ENCODE measurements at regions of chr7 and their contacts with region 1.

Region 1: DNA sequence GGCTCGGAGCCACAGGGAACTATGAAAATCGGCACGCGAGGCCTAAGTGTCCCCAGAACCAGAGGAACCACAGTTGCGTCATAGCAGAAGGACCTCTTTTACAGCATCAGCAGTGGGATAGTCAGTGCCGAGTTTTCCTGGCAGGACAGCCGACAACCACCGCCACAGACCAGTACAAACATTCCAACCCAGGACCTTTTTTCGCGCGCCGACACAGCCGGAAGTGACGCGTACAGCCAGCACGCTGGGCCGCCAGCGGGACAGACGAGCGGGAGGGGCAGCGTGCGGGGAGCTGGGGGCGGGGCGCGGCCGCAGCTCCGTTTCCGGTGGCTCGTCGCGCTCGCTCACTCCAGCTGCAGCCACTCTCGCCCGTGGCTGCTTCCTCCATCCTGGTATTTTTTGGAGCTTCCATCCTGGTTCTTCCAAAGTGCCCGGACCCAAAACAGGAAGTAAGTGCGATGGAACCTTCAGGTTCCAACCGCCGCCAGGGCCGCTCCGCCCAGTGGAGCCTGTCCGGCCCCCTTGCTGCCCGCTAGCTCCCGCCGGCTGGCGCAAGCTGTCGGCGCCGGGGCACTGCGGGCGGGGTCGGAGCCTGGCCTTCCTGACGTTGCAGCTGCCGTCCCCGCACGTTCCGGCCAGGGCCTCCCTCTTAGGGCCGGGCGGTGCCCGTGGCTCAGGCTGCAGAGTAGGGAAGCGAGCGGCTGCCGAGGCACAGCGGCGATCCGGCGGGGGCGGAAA is at the start of gene DMTF1:
- DNase-seq: peak; percentile 81 to 95
- ATAC-seq: peak; percentile 92 to 95
- H3K4me3 ChIP-seq: peak within 1 kb of the TSS; percentile 61
- H3K27ac ChIP-seq: peak within 1 kb of the TSS; percentile 90 to 99
- H3K4me1 ChIP-seq: peaks cover 36% of the 10 kb centered on the region
- CTCF ChIP-seq: no peak
- EP300 ChIP-seq: no peak
- POLR2A ChIP-seq: peak; percentile 76
- RAD21 ChIP-seq: no peak
- polyA plus RNA-seq, gene DMTF1: 110 and 124 TPM in 2 replicates

Region 2: DNA sequence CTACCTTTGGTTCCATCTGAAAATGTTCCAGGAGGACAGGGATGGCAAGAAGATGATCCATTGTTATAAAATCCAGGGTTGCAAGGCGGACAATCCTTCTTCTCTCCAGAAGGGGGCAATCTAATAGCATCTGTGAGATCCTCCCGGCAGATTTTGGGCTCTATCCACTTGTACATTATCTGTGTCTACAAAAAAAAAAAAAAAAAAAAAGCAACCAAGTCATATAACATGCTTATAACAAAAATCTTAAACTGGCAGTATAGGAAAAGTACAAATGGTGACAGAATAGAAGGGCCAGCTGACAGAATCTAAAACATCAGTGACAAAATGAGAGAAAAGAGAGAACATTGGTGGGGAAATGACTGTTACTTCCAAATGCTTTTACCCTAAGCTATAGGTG is 225.5 kb before region 1 on chr7:
- CTCF ChIA-PET with region 1: interaction called, 12 read pairs
- POLR2A ChIA-PET with region 1: no interaction called
- DNase-seq: peak; percentile 14 to 49
- ATAC-seq: peak; percentile 47 to 76; a peak in 3 of 6 replicates
- H3K4me3 ChIP-seq: no peak overlapping the region
- H3K27ac ChIP-seq: no peak overlapping the region
- H3K4me1 ChIP-seq: no peaks in the 10 kb centered on the region
- CTCF ChIP-seq: peak; percentile 57
- EP300 ChIP-seq: no peak
- POLR2A ChIP-seq: no peak
- RAD21 ChIP-seq: peak; percentile 41 to 57

Region 3: DNA sequence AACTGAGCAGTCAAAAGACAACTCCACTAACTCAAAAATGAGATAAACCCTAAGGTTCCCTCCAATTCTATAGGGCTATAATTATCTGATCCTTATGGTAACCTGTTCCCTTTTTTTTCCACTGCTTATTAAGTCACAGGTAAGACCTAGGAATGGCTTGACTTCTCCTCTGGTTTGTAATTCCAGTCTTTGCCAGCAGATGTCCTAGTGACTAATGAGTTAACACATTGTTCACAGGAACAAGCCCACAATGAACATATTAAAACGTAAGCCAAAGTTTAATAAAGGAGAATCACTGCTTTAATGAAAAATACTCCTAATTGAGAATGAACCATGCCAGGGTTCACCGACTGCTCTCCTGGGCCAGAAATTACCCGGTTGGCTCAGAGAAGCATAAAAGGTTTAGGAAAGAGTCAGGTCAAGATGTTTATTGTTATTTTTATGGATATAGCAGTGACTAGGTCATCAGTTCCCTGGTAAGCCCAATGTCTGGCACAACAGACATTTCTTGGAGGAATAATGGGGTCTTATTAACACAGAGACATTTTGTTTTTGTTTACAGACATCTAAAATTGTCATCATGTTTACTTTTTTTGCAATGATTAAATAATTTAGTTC is 213.0 kb before region 1 on chr7:
- CTCF ChIA-PET with region 1: interaction called, 28 read pairs
- POLR2A ChIA-PET with region 1: no interaction called
- DNase-seq: peak; percentile 10 to 72
- ATAC-seq: peak; percentile 89 to 94
- H3K4me3 ChIP-seq: no peak overlapping the region
- H3K27ac ChIP-seq: no peak overlapping the region
- H3K4me1 ChIP-seq: no peaks in the 10 kb centered on the region
- CTCF ChIP-seq: peak; percentile 62
- EP300 ChIP-seq: no peak
- POLR2A ChIP-seq: no peak
- RAD21 ChIP-seq: peak; percentile 50 to 51

Region 4: DNA sequence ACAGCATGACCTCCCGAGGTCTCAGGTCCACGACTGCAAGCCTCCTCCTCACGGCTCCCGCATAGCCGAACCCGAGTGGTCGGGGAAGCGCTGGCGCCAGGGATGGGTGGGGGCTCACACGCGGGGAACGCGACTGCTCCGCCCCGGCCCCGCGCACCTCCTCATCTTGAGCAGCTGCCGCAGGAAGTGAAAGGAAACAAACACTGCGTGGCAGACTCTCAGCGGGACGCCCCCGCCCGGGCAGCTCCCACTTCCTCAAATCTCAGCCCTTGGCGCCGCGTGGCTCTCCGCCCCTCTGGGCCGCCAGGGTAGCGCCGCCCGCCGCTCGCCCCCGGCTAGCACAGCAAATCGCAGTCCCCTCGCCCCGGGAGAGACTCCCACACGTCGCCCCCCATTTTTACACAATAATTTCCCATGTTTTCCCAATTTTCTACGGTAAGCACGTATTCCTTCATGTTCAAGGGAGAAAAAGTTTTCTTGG is 67.3 kb after region 1 on chr7 and contains the start of gene TMEM243:
- CTCF ChIA-PET with region 1: interaction called, 3 read pairs
- POLR2A ChIA-PET with region 1: interaction called, 24 read pairs
- DNase-seq: peak; percentile 51 to 53
- ATAC-seq: peak; percentile 63 to 86
- H3K4me3 ChIP-seq: peak within 1 kb of the TSS; percentile 99
- H3K27ac ChIP-seq: peak within 1 kb of the TSS; percentile 67 to 86
- H3K4me1 ChIP-seq: peaks cover 11% of the 10 kb centered on the region
- CTCF ChIP-seq: no peak
- EP300 ChIP-seq: no peak
- POLR2A ChIP-seq: peak; percentile 32
- RAD21 ChIP-seq: no peak
- polyA plus RNA-seq, gene TMEM243: 35.0 and 36.1 TPM in 2 replicates